ENCODE measurements at regions of chr12 and their contacts with region 1.

Region 1: GRCh38 chr12:65106948-65107347 is 14.2 kb downstream of the WIF1 start:
- H3K4me3 ChIP-seq: no peak overlapping the region
- H3K27ac ChIP-seq: no peak overlapping the region
- H3K4me1 ChIP-seq: no peaks in the 10 kb centered on the region
- CTCF ChIP-seq: no peak

Region 2: DNA sequence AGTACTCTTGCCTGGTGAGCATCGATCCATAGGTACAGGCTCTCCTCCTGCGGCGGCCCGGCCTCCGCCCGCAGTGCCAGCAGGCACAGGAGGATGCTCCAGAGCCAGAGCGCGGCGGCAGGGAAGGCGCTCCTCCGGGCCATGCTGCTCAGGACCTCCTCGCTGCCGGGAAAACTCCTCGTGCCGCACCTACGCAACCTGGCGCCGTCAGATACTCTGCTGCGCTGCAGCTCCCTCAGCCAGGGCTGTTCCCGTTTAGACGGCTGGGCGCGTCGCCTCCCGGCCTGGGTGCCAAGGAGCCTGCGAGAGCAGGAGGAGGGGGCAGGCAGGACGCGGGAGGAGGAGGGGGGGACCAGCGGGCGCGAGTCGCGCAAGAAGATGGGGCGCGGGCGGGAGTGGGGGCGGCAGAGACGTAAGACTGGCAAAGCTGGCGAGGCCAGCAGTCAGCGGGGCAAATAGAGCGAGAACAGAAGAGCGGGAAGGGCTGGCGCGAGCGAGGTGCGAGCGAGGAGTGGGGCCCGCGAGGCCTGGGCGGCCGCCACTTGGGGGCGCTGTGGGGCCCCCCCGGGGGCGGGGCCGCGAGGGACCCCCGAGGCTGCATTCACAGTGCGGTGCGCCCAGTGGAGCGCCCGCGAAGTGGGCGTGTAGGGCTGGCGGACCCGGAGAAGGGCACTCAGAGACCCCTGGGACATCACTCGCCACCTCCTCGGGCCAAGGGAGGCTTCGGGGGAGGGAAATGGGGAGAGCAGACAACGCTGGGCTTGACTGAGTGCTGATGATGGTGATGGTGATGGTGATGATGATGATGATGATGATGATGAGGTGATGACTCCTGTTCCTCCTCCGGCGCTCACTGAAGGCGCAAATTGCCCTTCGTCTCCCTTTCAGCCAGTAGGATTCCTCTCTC is 14.4 kb after region 1 on chr12 and contains the start of gene WIF1:
- CTCF ChIA-PET with region 1: interaction called, 12 read pairs
- POLR2A ChIA-PET with region 1: no interaction called
- H3K4me3 ChIP-seq: peak within 1 kb of the TSS; percentile 34
- H3K27ac ChIP-seq: no peak within 1 kb of the TSS; the same call in 1 of the 2 replicates
- H3K4me1 ChIP-seq: peaks cover 7% of the 10 kb centered on the region
- CTCF ChIP-seq: peak; percentile 29; the same call in 1 of the 2 replicates